Activated CD4-positive, alpha-beta T cell treated with anti-CD3 and anti-CD28 coated beads, Interleukin-2, amount 10 ng/mL, durations not matched to agents 24 days and 14 days (primary cell): ENCODE measurements at regions of chr15 and their contacts with region 1.

Region 1: GRCh38 chr15:66946578-66947164 is 118.7 kb upstream of the SMAD3 start:
- DNase-seq: peak; percentile 92
- H3K4me3 Mint-ChIP-seq: no peak overlapping the region
- H3K27ac Mint-ChIP-seq: no peak overlapping the region
- H3K4me1 Mint-ChIP-seq: peaks cover 12% of the 10 kb centered on the region
- H3K27me3 Mint-ChIP-seq: peaks cover 6% of the 10 kb centered on the region

Region 2: DNA sequence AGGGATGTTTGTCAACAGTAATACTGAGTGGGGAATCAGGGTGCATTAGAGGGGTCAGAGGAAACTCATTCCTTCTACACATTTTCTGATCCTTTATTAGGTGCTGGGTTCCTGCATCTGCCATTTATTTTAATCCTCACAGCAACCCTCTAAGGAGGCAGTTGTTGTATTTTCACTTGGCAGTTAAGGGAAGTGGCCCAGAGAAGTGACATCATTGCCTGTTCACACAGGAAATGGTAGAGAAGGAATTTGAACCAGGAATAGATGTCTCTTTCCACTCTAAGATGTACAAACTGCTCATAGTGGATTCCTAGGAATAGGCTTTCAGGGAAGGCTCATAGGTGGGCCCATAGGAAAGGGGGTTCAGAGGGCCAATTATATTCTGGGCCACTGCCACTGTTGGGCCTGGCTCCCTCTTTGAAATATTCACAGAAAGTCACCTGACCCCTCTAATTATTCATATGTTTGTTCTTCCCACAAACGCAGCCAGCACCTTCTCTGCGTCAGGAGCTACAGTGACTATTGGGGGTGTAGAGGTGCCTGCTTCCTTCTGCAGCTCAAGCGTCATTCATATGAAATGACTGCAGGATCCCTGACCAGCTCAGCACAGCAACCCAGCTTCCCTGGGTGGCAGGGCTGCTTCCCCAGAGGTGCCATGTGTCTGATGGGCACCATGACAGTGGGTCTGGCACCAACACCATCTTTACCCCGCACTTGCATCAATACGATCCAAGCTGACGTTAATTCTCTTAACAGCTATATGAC is 45.2 kb before region 1 on chr15:
- intact Hi-C with region 1: no loop called
- DNase-seq: no peak
- H3K4me3 Mint-ChIP-seq: no peak overlapping the region
- H3K27ac Mint-ChIP-seq: no peak overlapping the region
- H3K4me1 Mint-ChIP-seq: peaks cover 16% of the 10 kb centered on the region
- H3K27me3 Mint-ChIP-seq: peaks cover 8% of the 10 kb centered on the region

Region 3: GRCh38 chr15:67024314-67024997 is 77.8 kb after region 1 on chr15:
- intact Hi-C with region 1: loop called (anchors 5 kb)
- DNase-seq: no peak
- H3K4me3 Mint-ChIP-seq: peak overlapping the region; percentile 49
- H3K27ac Mint-ChIP-seq: peak overlapping the region; percentile 64
- H3K4me1 Mint-ChIP-seq: peaks cover 28% of the 10 kb centered on the region
- H3K27me3 Mint-ChIP-seq: no peaks in the 10 kb centered on the region

Region 4: GRCh38 chr15:67080900-67081431 is 134.3 kb after region 1 on chr15:
- intact Hi-C with region 1: loop called (anchors 5 kb)
- DNase-seq: peak; percentile 83
- H3K4me3 Mint-ChIP-seq: peak overlapping the region; percentile 63
- H3K27ac Mint-ChIP-seq: peak overlapping the region; percentile 96
- H3K4me1 Mint-ChIP-seq: peaks cover 94% of the 10 kb centered on the region
- H3K27me3 Mint-ChIP-seq: no peaks in the 10 kb centered on the region

Region 5: DNA sequence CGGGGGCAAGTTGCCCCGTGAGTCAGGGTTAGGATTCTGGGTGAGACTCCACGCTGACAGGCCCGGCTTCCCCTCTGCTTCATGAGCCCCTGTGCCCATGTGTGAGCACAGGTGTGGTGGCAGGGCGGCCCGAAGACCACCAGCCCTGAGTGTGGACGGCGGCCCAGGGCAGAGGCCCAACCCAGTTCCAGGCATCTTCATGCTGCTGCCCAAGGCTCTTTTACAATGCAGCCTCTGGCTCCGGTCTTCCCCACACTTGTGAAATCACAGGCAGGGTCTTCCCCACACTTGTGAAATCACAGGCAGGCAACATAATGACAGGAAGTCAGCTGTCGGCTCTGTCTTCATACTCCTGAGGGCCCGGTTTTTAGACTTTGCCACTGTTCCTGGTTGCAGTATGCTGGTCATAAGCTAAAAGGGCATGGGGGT is 229.0 kb after region 1 on chr15:
- intact Hi-C with region 1: loop called (anchors 10 kb)
- DNase-seq: peak; percentile 71
- H3K4me3 Mint-ChIP-seq: peak overlapping the region; percentile 24
- H3K27ac Mint-ChIP-seq: peak overlapping the region; percentile 82
- H3K4me1 Mint-ChIP-seq: peaks cover 63% of the 10 kb centered on the region
- H3K27me3 Mint-ChIP-seq: no peaks in the 10 kb centered on the region

Region 6: GRCh38 chr15:67240235-67241131 is 293.8 kb after region 1 on chr15:
- intact Hi-C with region 1: loop called (anchors 5 kb)
- DNase-seq: peak; percentile 72
- H3K4me3 Mint-ChIP-seq: peak overlapping the region; percentile 80
- H3K27ac Mint-ChIP-seq: peak overlapping the region; percentile 91
- H3K4me1 Mint-ChIP-seq: peaks cover 44% of the 10 kb centered on the region
- H3K27me3 Mint-ChIP-seq: no peaks in the 10 kb centered on the region

Region 7: GRCh38 chr15:67303490-67304363 is 357.1 kb after region 1 on chr15:
- intact Hi-C with region 1: loop called (anchors 1 kb)
- DNase-seq: peak; percentile 73
- H3K4me3 Mint-ChIP-seq: no peak overlapping the region
- H3K27ac Mint-ChIP-seq: no peak overlapping the region
- H3K4me1 Mint-ChIP-seq: peaks cover 4% of the 10 kb centered on the region
- H3K27me3 Mint-ChIP-seq: peaks cover 12% of the 10 kb centered on the region

Region 8: GRCh38 chr15:67433495-67434099 is 486.9 kb after region 1 on chr15:
- intact Hi-C with region 1: loop called (anchors 1 kb)
- DNase-seq: peak; percentile 74
- H3K4me3 Mint-ChIP-seq: no peak overlapping the region
- H3K27ac Mint-ChIP-seq: no peak overlapping the region
- H3K4me1 Mint-ChIP-seq: no peaks in the 10 kb centered on the region
- H3K27me3 Mint-ChIP-seq: peaks cover 7% of the 10 kb centered on the region